HepG2 (cell line): ENCODE measurements at regions of chr5 and their contacts with region 1.

Region 1: DNA sequence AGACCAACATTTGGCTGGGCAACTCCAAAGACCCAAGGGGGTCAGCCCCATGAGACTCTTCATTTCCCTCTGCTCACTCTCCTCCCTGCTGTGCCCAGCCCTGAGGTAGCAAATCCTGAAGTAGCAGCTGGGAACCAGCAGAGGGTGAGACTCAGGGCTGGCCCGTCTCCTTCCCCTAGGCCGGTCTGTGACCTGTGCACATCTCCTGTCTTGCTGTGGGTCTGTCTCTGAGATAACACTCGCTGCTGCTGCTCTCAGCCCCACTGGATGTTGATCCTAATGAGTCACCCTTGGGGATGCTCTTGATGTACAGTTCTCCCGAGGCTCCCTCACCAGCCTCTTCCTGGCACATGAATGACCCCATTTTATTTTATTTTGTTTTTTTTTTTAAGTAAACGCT is 7.3 kb upstream of the OR2V1 start:
- DNase-seq: no peak
- ATAC-seq: peak; percentile 73
- H3K4me3 ChIP-seq: no peak overlapping the region
- H3K27ac ChIP-seq: no peak overlapping the region
- H3K4me1 ChIP-seq: no peaks in the 10 kb centered on the region
- H3K27me3 ChIP-seq: peaks cover 2 to 30% of the 10 kb centered on the region in 2 experiments; a peak in 4 of 5 replicates
- CTCF ChIP-seq: no peak
- EP300 ChIP-seq: no peak
- POLR2A ChIP-seq: no peak
- RAD21 ChIP-seq: no peak

Region 2: DNA sequence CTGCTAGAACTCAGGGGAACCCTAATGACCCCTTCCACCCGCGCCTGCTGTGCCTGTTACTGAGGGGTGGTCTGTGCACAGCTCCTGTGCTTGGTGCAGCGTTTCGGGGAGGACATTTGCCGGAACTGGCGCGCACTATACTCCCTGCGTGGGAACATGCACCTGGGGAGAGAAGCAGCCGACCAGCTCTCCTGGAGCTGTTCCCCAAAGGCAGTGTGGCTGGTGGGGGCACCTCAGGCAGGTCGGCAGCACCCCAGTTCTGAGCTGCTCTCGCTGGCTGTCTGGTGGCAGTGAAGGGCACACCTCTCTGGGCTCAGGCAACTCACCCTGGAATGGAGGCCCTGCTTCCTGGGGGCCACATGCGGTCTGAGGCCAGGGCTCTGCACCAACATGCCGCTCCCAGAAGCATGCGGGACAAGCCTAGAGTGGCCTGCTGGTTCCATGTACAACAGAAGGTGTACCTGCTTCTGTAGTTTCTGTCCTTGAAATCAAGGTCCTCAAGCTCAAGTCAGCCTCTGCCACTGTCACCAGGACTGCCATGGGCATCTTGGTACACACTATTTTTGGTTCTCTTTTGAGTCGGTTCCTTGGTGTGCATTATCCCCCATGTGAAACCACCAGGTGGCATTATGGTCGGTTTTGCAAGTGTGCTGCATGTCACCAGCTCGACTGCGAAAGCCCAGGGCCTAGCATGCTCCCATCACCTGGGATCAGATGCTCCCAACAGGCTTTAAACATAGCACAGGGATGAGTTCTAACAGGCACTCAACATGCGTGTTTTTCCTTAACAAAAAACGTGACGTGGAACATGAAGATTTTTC is 1271.8 kb before region 1 on chr5:
- CTCF ChIA-PET with region 1: no interaction called
- POLR2A ChIA-PET with region 1: no interaction called
- in situ Hi-C with region 1: no loop called
- intact Hi-C with region 1: loop called (anchors 5 kb)
- DNase-seq: no peak
- ATAC-seq: 0 out of 3 replicates have a peak, but pooled peaks have one; percentile 10
- H3K4me3 ChIP-seq: no peak overlapping the region
- H3K27ac ChIP-seq: no peak overlapping the region
- H3K4me1 ChIP-seq: no peaks in the 10 kb centered on the region
- H3K27me3 ChIP-seq: no peaks in the 10 kb centered on the region
- CTCF ChIP-seq: peak; percentile 43
- EP300 ChIP-seq: no peak
- POLR2A ChIP-seq: no peak
- RAD21 ChIP-seq: no peak

Region 3: DNA sequence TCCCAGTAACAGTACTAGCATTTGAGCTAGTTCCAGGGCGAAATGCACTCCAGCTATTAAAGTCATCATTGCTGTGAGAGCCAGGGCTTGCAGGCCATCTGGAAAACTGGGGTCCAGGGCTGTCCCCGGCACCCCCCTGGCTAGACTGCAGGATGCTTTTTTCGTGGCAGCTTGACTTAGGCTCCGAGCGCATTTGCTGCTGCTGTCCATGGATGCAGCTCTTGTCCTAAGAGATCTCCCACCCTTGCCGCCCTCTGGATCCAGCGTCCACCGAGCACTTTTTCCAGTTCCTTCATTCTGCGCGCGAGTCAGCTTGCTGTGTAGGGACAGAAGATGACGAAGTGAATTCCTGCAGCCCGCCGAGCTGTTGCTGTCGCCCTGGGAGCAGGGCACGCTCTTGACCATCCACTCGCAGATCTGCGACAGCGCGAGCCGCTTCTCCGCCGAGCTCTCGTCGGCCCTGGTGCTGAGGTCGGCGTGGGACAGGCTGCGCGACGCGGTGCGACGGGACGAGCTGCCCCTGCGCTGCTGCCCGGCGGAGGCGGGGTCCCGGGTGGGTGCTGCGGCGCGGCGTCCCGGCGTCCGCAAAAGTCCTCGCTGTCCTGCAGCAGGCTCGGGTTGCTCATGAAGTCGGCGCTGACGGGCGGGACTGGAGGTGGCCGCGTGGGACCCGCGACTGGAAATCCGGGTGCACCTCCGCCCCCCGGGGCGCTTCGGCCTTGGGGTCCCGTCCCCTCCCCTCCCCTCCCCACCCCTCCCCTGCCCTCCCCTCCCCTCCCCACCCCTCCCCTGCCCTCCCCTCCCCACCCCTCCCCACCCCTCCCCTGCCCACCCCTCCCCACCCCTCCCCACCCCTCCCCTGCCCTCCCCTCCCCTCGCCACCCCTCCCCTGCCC is 37.9 kb before region 1 on chr5:
- CTCF ChIA-PET with region 1: no interaction called
- POLR2A ChIA-PET with region 1: no interaction called
- in situ Hi-C with region 1: no loop called
- intact Hi-C with region 1: no loop called
- DNase-seq: no peak
- ATAC-seq: peak; percentile 55
- H3K4me3 ChIP-seq: no peak overlapping the region
- H3K27ac ChIP-seq: no peak overlapping the region
- H3K4me1 ChIP-seq: no peaks in the 10 kb centered on the region
- H3K27me3 ChIP-seq: peaks cover 2 to 18% of the 10 kb centered on the region in 2 experiments; a peak in 3 of 5 replicates
- CTCF ChIP-seq: no peak
- EP300 ChIP-seq: no peak
- POLR2A ChIP-seq: no peak
- RAD21 ChIP-seq: no peak

Region 4: DNA sequence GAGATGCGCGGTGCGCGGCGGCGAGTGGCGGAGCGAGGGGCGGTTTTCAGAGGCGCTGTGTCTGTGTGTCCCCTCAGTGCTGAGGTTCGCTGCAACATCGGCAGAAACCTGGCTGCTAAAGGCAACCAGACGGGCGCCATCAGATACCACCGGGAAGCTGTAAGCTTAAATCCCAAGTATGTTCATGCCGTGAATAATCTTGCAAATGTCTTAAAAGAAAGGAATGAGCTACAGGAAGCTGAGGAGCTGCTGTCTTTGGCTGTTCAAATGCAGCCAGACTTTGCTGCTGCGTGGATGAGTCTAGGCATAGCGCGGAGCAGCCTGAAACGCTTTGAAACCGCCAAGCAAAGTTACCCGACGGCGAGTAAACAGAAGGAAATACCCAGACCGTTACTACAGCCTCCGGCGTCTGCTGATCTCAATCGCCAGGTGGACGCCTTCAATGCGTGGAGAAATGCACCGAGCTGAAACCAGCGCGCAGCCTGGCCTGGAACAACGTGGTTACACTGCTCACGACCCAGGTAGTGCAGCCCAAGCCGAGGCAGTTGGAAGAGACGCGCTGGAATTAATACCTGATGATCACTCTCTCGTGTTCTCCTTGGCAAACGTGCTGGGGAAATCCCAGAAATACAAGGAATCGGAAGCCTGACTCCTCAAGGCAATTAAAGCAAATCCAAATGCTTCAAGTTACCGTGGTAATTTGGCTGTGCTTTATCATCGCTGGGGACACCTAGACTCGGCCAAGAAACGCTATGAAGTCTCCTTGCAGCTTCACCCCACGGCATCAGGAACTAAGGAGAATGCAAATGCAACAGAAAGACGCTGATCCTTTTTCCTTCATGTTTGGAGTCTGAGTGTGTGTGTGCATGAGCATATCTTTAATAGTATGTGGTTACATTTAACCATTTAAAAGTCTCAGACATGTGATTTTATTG is 23.1 kb before region 1 on chr5:
- CTCF ChIA-PET with region 1: no interaction called
- POLR2A ChIA-PET with region 1: no interaction called
- in situ Hi-C with region 1: no loop called
- intact Hi-C with region 1: loop called (anchors 1 kb)
- DNase-seq: no peak
- ATAC-seq: no peak
- H3K4me3 ChIP-seq: no peak overlapping the region
- H3K27ac ChIP-seq: no peak overlapping the region
- H3K4me1 ChIP-seq: no peaks in the 10 kb centered on the region
- H3K27me3 ChIP-seq: peaks cover 6 to 54% of the 10 kb centered on the region in 2 experiments
- CTCF ChIP-seq: no peak
- EP300 ChIP-seq: no peak
- POLR2A ChIP-seq: no peak
- RAD21 ChIP-seq: no peak